Endothelial cell of umbilical vein (primary cell): ENCODE measurements at regions of chr11 and their contacts with region 1.

Region 1: DNA sequence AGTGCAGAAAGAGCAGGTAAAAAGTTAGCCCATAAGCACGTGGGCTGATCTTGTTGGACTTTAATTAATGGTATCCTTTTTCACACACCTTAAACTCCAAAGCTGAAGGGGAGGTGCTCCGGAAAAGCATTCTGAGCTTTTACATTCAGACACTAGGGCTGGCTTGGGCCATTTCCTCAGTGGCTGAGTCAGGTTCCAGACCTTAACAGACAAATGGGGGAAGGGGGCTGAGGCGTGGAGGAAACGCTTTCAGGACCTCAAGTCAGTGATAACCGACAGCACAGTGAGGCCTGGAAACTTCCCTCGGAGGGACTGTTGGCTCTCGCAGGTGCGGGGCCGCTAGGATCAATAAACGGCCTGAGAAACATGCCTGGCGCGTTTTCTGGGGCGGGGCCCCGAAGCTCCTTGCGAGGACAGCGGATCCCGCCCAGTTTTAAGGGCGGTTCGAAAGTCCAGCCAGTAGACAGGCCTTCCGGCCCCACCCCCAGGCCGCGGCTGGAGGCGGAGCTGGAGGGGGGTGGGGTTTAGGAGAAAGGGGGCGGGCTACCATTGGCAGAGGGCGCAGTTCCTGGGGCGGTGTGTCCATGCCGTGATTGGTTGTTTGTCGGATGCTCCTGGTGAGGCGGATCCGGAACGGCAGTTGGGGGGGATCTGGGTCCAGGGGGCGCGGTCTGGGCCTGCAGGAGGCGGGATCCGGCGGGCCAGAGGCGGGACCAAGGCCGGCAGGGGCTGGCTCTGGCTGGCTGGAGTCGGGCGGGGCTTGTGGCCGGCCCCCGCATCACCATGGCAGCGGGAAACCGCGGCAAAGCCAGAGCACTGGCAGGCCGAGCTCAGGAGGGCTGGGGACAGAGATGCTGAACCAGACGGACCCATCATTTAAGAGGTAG is 8.0 kb downstream of the C11orf52 start:
- DNase-seq: peak; percentile 98
- H3K4me3 ChIP-seq: peak overlapping the region; percentile 38 to 66 (median 38)
- H3K27ac ChIP-seq: peak overlapping the region; percentile 98
- H3K4me1 ChIP-seq: peaks cover 28% of the 10 kb centered on the region
- H3K27me3 ChIP-seq: no peaks in the 10 kb centered on the region
- CTCF ChIP-seq: peak in 1 of 2 donors; percentile 20
- POLR2A ChIP-seq: peak; percentile 88

Region 2: GRCh38 chr11:111441443-111441842 is 485.3 kb before region 1 on chr11:
- CTCF ChIA-PET with region 1: no interaction called
- POLR2A ChIA-PET with region 1: no interaction called
- dilution Hi-C with region 1: no loop called
- intact Hi-C with region 1: no loop called
- DNase-seq: no peak
- H3K4me3 ChIP-seq: no peak overlapping the region
- H3K27ac ChIP-seq: no peak overlapping the region
- H3K4me1 ChIP-seq: peaks cover 3% of the 10 kb centered on the region
- H3K27me3 ChIP-seq: peaks cover 0 to 2% of the 10 kb centered on the region in 2 experiments
- CTCF ChIP-seq: no peak
- POLR2A ChIP-seq: no peak

Region 3: GRCh38 chr11:111870886-111871692 is 55.7 kb before region 1 on chr11 and contains the start of gene ALG9:
- CTCF ChIA-PET with region 1: interaction called, 9 read pairs
- POLR2A ChIA-PET with region 1: interaction called, 5 read pairs
- dilution Hi-C with region 1: no loop called
- intact Hi-C with region 1: loop called (anchors 2 kb)
- DNase-seq: peak; percentile 87
- H3K4me3 ChIP-seq: peak within 1 kb of the TSS; percentile 72 to 93 (median 81)
- H3K27ac ChIP-seq: peak within 1 kb of the TSS; percentile 71
- H3K4me1 ChIP-seq: peaks cover 8% of the 10 kb centered on the region
- H3K27me3 ChIP-seq: no peaks in the 10 kb centered on the region
- CTCF ChIP-seq: peak; percentile 8 to 15
- POLR2A ChIP-seq: peak; percentile 92
- total RNA-seq, gene ALG9: 29.1 and 33.5 TPM in 2 replicates

Region 4: GRCh38 chr11:111975076-111975806 is 48.5 kb after region 1 on chr11:
- CTCF ChIA-PET with region 1: interaction called, 407 read pairs
- POLR2A ChIA-PET with region 1: interaction called, 6 read pairs
- dilution Hi-C with region 1: no loop called
- intact Hi-C with region 1: loop called (anchors 1 kb)
- DNase-seq: peak; percentile 88
- H3K4me3 ChIP-seq: no peak overlapping the region
- H3K27ac ChIP-seq: peak overlapping the region; percentile 29
- H3K4me1 ChIP-seq: peaks cover 45% of the 10 kb centered on the region
- H3K27me3 ChIP-seq: no peaks in the 10 kb centered on the region
- CTCF ChIP-seq: peak; percentile 35 to 41
- POLR2A ChIP-seq: peak; percentile 54

Region 5: DNA sequence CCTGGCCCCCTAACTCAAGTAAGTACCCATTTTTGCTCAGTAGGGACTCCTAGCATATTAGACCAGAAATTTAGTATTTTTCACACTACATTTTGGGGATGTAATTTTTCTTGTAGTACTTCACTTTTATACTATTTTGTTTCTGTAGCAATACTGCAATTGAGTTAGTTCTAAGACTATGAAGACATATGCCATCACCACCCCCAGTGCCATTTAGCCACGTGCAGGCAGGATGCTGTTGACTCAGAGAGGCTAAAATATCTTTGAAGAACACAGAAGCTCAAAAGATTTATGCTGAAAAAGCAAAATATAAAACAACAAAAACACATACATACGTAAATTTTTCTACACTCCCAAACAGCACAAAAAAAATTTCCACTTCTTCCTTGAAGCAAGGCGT is 69.4 kb after region 1 on chr11:
- CTCF ChIA-PET with region 1: interaction called, 18 read pairs
- POLR2A ChIA-PET with region 1: no interaction called
- dilution Hi-C with region 1: no loop called
- intact Hi-C with region 1: loop called (anchors 1 kb)
- DNase-seq: no peak
- H3K4me3 ChIP-seq: no peak overlapping the region
- H3K27ac ChIP-seq: no peak overlapping the region
- H3K4me1 ChIP-seq: no peaks in the 10 kb centered on the region
- H3K27me3 ChIP-seq: no peaks in the 10 kb centered on the region
- CTCF ChIP-seq: no peak
- POLR2A ChIP-seq: no peak

Region 6: DNA sequence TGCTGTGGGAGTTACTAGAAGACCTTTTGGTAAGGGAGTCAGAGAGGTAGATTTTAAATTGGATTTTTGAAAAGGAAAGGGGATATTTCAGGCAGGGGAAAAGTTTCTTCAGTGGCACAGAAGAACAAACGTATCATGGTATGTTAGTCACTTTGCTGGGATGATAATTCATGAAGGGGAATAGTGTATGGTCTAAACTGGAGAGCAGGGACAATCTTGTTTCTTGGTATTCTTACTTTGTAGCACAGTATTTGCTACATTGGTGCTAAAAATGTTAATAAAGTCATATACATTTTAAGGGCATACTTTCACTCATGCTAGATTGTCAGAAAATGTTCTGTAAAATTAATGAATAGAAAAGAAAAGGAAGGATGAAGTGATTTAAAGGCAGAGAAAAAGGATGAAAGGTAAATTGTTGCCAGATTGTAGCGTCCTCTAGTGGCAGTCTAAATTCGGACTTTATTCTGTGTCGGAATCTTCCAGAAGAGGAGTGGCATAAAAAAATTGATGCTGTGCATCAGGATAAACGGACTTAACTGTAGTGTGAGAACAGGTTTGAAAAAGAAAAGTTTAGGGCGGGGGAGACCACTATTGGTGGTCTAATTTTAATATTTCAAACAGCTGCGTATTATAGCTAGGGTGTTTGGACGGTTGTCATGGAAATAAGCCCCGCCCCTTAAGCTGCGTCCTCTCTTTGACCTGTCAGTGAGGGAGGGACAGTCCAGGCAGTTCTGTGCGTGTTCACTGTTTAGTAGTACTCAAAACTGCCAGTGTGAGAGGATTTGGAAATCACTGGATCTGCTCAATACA is 248.2 kb after region 1 on chr11 and contains the start of gene BCO2:
- CTCF ChIA-PET with region 1: interaction called, 7 read pairs
- POLR2A ChIA-PET with region 1: no interaction called
- dilution Hi-C with region 1: no loop called
- intact Hi-C with region 1: loop called (anchors 5 kb)
- DNase-seq: peak; percentile 82
- H3K4me3 ChIP-seq: peak within 1 kb of the TSS; percentile 17 to 68 (median 37)
- H3K27ac ChIP-seq: peak within 1 kb of the TSS; percentile 69
- H3K4me1 ChIP-seq: peaks cover 16% of the 10 kb centered on the region
- H3K27me3 ChIP-seq: peaks cover 4 to 6% of the 10 kb centered on the region in 2 experiments
- CTCF ChIP-seq: peak; percentile 73 to 82
- POLR2A ChIP-seq: no peak
- total RNA-seq, gene BCO2: 1.4 and 1.9 TPM in 2 replicates